Endothelial cell of umbilical vein (primary cell): ENCODE measurements at regions of chr14 and their contacts with region 1.

Region 1: GRCh38 chr14:83913466-83913865 is 1616.5 kb upstream of the FLRT2 start:
- DNase-seq: no peak
- H3K4me3 ChIP-seq: no peak overlapping the region
- H3K27ac ChIP-seq: no peak overlapping the region
- H3K4me1 ChIP-seq: no peaks in the 10 kb centered on the region
- H3K27me3 ChIP-seq: no peaks in the 10 kb centered on the region
- CTCF ChIP-seq: no peak
- POLR2A ChIP-seq: no peak

Region 2: DNA sequence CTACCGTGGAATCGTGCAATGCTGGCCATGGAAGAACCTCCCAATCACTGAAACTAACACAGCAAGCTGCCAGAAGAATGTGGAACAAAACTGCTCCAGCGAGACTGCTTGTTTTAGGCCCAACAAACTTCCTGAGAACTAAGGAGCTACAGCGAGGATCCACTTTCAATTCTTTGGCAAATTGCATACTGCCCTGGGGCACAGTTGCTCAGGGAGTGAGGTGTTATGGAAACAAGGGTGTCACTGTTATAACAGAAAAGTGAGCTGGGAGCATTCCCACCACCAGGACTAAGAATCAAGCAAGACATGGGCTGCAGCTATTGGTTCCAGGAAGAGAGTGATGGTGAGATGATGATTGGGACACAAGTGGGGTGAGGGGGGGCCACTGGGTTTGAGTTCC is 10.4 kb after region 1 on chr14:
- CTCF ChIA-PET with region 1: interaction called, 11 read pairs
- POLR2A ChIA-PET with region 1: no interaction called
- dilution Hi-C with region 1: no loop called
- intact Hi-C with region 1: no loop called
- DNase-seq: no peak
- H3K4me3 ChIP-seq: no peak overlapping the region
- H3K27ac ChIP-seq: no peak overlapping the region
- H3K4me1 ChIP-seq: no peaks in the 10 kb centered on the region
- H3K27me3 ChIP-seq: no peaks in the 10 kb centered on the region
- CTCF ChIP-seq: no peak
- POLR2A ChIP-seq: no peak